IMR-90 (cell line): ENCODE measurements at regions of chr1 and their contacts with region 1.

Region 1: DNA sequence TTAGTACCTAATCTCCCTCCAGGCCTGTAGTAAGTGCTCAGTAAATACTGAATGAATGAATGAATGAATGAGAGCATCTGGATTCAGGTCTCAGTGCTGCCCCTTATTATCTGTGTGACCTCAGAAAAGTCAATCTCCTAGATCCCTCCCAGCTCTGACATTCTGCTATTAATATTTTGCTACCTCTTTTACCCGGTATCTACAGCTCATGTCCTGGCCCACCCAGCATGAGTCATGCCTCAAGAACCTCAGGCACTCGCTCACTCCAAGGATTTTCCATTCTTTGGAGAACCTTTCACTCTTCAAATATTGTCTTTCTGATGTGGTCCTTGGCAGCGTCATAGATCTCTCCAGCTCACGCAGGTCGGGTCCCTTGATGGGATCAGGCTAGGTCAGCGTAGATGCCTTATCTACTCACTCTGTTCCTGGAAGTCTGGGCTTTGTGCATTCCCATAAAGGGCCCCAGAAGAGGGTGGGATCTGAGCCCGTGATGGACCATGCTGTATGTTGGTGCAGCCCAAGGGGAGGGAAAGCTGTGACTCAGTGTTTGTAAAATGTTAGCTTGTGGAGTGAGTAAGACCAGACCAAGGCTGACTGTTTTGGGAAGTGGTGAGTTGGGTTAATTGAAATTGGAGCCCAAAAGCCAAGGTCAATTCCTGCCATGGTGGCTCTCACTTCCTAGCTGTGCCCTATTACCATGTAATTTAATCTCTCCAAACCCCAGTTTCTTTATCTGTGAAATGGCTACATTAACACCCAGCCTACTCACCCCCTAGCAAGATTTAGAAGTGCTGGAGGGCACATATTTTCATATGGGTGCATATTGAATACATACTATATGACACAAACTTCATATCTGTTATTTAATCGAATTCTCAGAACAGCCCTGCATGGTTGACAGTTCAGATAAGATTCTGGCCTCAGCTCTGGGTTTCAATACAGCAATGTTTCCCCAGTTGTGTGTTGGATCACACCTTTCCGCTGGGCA is 214.1 kb upstream of the USP24 start:
- DNase-seq: peak; percentile 100
- ATAC-seq: peak; percentile 85
- H3K4me3 ChIP-seq: no peak overlapping the region
- H3K27ac ChIP-seq: peak overlapping the region; percentile 80
- H3K4me1 ChIP-seq: peaks cover 38% of the 10 kb centered on the region
- H3K27me3 ChIP-seq: no peaks in the 10 kb centered on the region
- CTCF ChIP-seq: no peak
- POLR2A ChIP-seq: 0 out of 2 replicates have a peak, but pooled peaks have one; percentile 15
- RAD21 ChIP-seq: peak; percentile 29; the same call in 1 of the 2 replicates

Region 2: DNA sequence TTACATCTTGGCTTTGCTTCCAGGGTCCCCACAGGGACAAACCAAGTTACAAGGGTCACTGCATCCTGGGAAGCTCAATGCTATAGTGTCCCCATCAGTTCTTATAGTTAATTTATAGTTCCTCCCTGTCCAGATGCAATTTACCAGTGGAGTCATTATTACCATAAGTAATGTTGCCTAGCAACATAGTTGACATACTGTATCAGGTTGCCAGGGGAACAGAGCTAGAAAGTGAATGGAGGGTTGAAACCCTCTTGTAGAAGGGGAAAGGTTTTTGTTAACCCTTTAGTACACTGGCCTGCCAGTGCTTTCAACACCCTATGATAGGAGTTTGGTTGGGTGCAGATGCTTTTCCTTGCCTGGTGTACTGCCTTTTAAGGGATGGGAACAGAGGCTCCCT is 747.9 kb before region 1 on chr1:
- CTCF ChIA-PET with region 1: no interaction called
- POLR2A ChIA-PET with region 1: no interaction called
- dilution Hi-C with region 1: no loop called
- in situ Hi-C with region 1: no loop called
- intact Hi-C with region 1: no loop called
- DNase-seq: peak; percentile 4
- ATAC-seq: no peak
- H3K4me3 ChIP-seq: no peak overlapping the region
- H3K27ac ChIP-seq: no peak overlapping the region
- H3K4me1 ChIP-seq: no peaks in the 10 kb centered on the region
- H3K27me3 ChIP-seq: peaks cover 59% of the 10 kb centered on the region
- CTCF ChIP-seq: no peak
- POLR2A ChIP-seq: no peak
- RAD21 ChIP-seq: no peak

Region 3: DNA sequence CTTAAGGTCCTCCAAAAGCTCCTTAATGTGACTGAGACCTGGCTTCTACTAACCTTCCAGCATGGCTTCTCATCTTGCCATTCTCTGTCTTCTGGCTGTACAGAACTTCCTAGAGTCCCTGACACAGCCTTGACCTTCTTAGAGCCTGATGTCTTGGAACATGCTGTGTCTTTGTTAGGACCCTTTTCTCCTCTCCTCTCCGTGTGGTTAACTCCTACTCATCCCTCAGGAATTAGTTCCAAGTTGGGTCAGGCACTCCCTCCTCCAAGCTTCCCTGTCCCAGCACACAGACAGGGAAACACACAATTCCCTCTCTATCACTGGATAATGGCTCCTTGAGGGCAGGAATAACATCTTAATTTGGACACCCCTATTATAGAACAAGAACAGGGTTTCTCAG is 61.3 kb after region 1 on chr1:
- CTCF ChIA-PET with region 1: no interaction called
- POLR2A ChIA-PET with region 1: no interaction called
- dilution Hi-C with region 1: no loop called
- in situ Hi-C with region 1: no loop called
- intact Hi-C with region 1: no loop called
- DNase-seq: peak; percentile 76
- ATAC-seq: peak; percentile 90
- H3K4me3 ChIP-seq: no peak overlapping the region
- H3K27ac ChIP-seq: peak overlapping the region; percentile 48; the same call in 1 of the 2 replicates
- H3K4me1 ChIP-seq: peaks cover 2% of the 10 kb centered on the region
- H3K27me3 ChIP-seq: no peaks in the 10 kb centered on the region
- CTCF ChIP-seq: no peak
- POLR2A ChIP-seq: no peak
- RAD21 ChIP-seq: no peak

Region 4: GRCh38 chr1:55670331-55671082 is 241.3 kb after region 1 on chr1:
- CTCF ChIA-PET with region 1: no interaction called
- POLR2A ChIA-PET with region 1: no interaction called
- dilution Hi-C with region 1: no loop called
- in situ Hi-C with region 1: no loop called
- intact Hi-C with region 1: loop called (anchors 5 kb)
- DNase-seq: peak; percentile 23
- ATAC-seq: peak; percentile 68
- H3K4me3 ChIP-seq: no peak overlapping the region
- H3K27ac ChIP-seq: peak overlapping the region; percentile 55; the same call in 1 of the 2 replicates
- H3K4me1 ChIP-seq: peaks cover 12% of the 10 kb centered on the region
- H3K27me3 ChIP-seq: no peaks in the 10 kb centered on the region
- CTCF ChIP-seq: no peak
- POLR2A ChIP-seq: no peak
- RAD21 ChIP-seq: no peak

Region 5: GRCh38 chr1:55718758-55719671 is 289.8 kb after region 1 on chr1:
- CTCF ChIA-PET with region 1: no interaction called
- POLR2A ChIA-PET with region 1: no interaction called
- dilution Hi-C with region 1: no loop called
- in situ Hi-C with region 1: no loop called
- intact Hi-C with region 1: loop called (anchors 2 kb)
- DNase-seq: peak; percentile 100
- ATAC-seq: peak; percentile 75
- H3K4me3 ChIP-seq: no peak overlapping the region
- H3K27ac ChIP-seq: peak overlapping the region; percentile 97
- H3K4me1 ChIP-seq: peaks cover 31% of the 10 kb centered on the region
- H3K27me3 ChIP-seq: no peaks in the 10 kb centered on the region
- CTCF ChIP-seq: no peak
- POLR2A ChIP-seq: peak; percentile 54; the same call in 1 of the 2 replicates
- RAD21 ChIP-seq: peak; percentile 38